ENCODE measurements at regions of chr5 and their contacts with region 1.

Region 1: GRCh38 chr5:164475339-164475977 is 970.0 kb downstream of the MAT2B start:
- DNase-seq: peak; percentile 25
- H3K4me3 ChIP-seq: no peak overlapping the region
- H3K27ac ChIP-seq: no peak overlapping the region; a peak in 1 of 4 replicates
- H3K4me1 ChIP-seq: no peaks in the 10 kb centered on the region; a peak in 1 of 4 replicates
- H3K27me3 ChIP-seq: no peaks in the 10 kb centered on the region
- CTCF ChIP-seq: peak; percentile 83
- EP300 ChIP-seq: no peak
- RAD21 ChIP-seq: peak; percentile 99

Region 2: DNA sequence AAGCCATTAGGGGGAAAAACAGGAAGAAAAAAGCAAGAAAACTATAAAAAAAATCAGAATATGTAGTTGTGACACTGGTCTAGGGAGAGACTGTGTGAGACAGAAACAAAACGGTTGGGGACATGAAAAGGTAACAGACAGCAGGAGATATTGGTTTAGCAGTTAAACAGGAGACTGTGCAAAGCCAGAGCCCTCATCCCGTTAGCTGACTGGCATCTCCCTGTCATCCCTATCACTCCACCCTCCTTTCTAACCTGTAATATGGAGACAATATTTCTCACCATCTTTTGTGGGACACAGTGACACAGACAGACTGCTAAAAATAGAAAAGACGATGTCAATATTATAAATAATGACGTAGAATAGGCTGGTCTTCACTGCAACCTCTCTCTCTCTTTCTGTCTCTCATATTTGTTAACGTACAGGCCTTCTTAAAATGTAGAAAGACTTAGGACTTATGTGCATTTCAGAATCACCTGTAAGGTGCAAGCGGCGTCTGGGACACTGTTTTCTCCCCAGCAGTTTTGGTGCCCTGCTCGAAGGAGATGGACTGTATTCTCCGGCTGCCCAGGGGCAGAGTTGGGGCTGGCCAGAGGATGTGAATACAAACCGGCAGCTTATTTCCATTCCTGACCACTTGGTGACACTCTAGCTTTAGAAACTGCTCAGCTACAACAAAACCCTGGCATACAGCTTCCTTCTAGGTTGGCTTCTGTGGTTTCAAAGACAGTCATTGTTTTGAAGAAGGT is 779.5 kb before region 1 on chr5:
- CTCF ChIA-PET with region 1: interaction called, 11 read pairs
- POLR2A ChIA-PET with region 1: no interaction called
- DNase-seq: peak; percentile 50
- H3K4me3 ChIP-seq: no peak overlapping the region; a peak in 1 of 4 replicates
- H3K27ac ChIP-seq: peak overlapping the region in 1 of 2 experiments; percentile 5; a peak in 1 of 4 replicates
- H3K4me1 ChIP-seq: peaks cover 0 to 2% of the 10 kb centered on the region in 2 experiments; a peak in 1 of 4 replicates
- H3K27me3 ChIP-seq: no peaks in the 10 kb centered on the region
- CTCF ChIP-seq: peak; percentile 81
- EP300 ChIP-seq: no peak
- RAD21 ChIP-seq: peak; percentile 98

Region 3: GRCh38 chr5:164370841-164371240 is 104.6 kb before region 1 on chr5:
- CTCF ChIA-PET with region 1: no interaction called
- POLR2A ChIA-PET with region 1: no interaction called
- DNase-seq: no peak
- H3K4me3 ChIP-seq: no peak overlapping the region
- H3K27ac ChIP-seq: no peak overlapping the region
- H3K4me1 ChIP-seq: no peaks in the 10 kb centered on the region; a peak in 2 of 4 replicates
- H3K27me3 ChIP-seq: no peaks in the 10 kb centered on the region
- CTCF ChIP-seq: no peak
- EP300 ChIP-seq: no peak
- RAD21 ChIP-seq: no peak